ENCODE measurements at regions of chr19 and their contacts with region 1.

Region 1: GRCh38 chr19:49363268-49364082 is at the start of gene DKKL1:
- DNase-seq: peak; percentile 92
- ATAC-seq: peak; percentile 88
- H3K4me3 Mint-ChIP-seq: no peak within 1 kb of the TSS
- H3K27ac Mint-ChIP-seq: no peak within 1 kb of the TSS
- H3K4me1 Mint-ChIP-seq: peaks cover 11% of the 10 kb centered on the region
- H3K27me3 Mint-ChIP-seq: peaks cover 23% of the 10 kb centered on the region
- total RNA-seq, gene DKKL1: not detected

Region 2: GRCh38 chr19:48624067-48624594 is 739.3 kb before region 1 on chr19:
- CTCF ChIA-PET with region 1: no interaction called
- POLR2A ChIA-PET with region 1: no interaction called
- intact Hi-C with region 1: no loop called
- DNase-seq: peak; percentile 99
- ATAC-seq: peak; percentile 84
- H3K4me3 Mint-ChIP-seq: peak overlapping the region; percentile 73
- H3K27ac Mint-ChIP-seq: peak overlapping the region; percentile 99
- H3K4me1 Mint-ChIP-seq: peaks cover 45% of the 10 kb centered on the region
- H3K27me3 Mint-ChIP-seq: no peaks in the 10 kb centered on the region

Region 3: DNA sequence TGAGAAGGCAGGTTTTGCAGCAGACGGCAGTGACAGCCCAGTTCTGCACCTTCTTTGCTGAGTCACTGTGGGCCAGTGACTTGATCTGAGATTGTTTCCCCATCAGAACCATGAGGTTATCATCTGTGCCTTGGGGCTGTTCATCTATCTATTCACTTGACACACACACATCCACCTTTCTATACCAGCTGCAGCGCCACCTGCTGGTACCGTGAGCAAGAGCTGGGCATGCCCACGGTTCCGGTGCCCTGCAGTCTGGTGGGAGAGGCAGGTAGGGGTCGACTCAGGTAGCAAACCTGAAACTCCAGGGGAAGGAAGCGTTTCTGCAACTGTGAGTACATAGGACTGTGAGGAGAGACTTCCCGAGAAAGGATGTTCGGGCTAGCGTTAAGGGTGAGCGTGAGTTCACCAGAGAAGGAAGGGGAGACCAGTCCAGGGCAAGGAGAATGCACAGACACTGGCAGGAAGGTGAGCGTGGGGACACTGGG is 256.8 kb before region 1 on chr19:
- CTCF ChIA-PET with region 1: no interaction called
- POLR2A ChIA-PET with region 1: no interaction called
- intact Hi-C with region 1: no loop called
- DNase-seq: peak; percentile 82
- ATAC-seq: peak; percentile 84
- H3K4me3 Mint-ChIP-seq: no peak overlapping the region
- H3K27ac Mint-ChIP-seq: no peak overlapping the region
- H3K4me1 Mint-ChIP-seq: peaks cover 4% of the 10 kb centered on the region
- H3K27me3 Mint-ChIP-seq: no peaks in the 10 kb centered on the region

Region 4: DNA sequence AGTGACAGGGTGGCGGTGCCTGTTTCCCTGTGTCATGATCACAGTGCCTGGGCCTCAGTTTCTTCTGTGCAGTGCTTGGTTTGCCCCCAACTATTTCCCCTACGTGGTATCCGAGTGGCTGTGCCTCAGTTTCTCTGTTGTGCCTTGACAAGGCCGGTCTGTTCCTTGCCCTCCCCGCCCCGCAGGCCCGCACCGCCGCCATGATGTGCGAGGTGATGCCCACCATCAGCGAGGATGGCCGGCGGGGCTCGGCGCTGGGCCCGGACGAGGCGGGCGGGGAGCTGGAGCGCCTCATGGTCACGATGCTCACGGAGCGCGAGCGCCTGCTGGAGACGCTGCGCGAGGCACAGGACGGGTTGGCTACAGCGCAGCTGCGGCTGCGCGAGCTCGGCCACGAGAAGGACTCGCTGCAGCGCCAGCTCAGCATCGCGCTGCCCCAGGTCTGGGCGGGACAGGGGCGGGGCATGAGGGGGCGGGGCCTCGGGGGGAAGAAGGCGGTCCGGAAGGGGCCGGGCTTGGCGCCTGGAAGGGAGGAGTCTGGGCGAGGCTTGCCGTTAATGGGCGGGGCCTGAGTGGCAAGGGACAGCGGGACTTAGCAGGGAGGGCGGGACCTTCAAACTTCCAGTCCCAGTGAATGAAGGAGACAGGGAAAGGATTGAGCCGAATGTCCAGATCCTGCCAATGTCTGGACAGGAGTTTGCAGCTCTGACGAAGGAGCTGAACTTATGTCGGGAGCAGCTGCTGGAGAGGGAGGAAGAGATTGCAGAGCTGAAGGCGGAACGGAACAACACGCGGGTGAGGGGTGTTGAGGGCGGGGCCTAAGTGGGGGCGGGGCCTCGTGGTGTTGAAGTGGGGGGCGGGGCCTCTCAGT is 235.6 kb before region 1 on chr19:
- CTCF ChIA-PET with region 1: no interaction called
- POLR2A ChIA-PET with region 1: no interaction called
- intact Hi-C with region 1: loop called in 1 of 2 experiments (anchors 1 kb)
- DNase-seq: peak; percentile 98
- ATAC-seq: peak; percentile 95
- H3K4me3 Mint-ChIP-seq: peak overlapping the region; percentile 76
- H3K27ac Mint-ChIP-seq: peak overlapping the region; percentile 92
- H3K4me1 Mint-ChIP-seq: peaks cover 11% of the 10 kb centered on the region
- H3K27me3 Mint-ChIP-seq: no peaks in the 10 kb centered on the region

Region 5: DNA sequence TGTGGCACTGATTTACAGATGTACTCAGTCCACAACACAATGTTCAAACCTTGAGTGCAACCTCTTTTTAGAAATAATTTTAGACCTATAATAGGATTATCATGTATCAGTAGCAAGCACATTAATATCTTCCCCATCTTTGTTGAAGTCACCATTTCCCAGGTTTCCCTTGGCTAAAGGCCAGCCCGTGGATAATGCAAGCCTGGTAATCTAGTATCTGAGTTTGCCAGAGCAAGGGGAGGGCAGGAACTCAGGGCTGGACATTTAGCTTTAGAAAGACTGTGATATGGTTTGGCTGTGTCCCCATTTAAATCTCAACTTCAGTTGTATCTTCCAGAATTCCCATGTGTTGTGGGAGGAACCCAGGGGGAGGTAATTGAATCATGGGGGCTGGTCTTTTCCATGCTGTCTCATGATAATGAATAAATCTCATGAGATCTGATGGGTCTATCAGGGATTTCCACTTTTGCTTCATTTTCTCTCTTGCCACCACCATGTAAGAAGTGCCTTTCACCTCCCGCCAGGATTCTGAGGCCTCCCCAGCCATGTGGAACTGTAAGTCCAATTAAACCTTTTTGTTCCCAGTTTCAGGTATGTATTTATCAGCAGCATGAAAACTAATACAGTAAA is 76.2 kb before region 1 on chr19:
- CTCF ChIA-PET with region 1: no interaction called
- POLR2A ChIA-PET with region 1: no interaction called
- intact Hi-C with region 1: no loop called
- DNase-seq: no peak
- ATAC-seq: no peak
- H3K4me3 Mint-ChIP-seq: no peak overlapping the region
- H3K27ac Mint-ChIP-seq: no peak overlapping the region
- H3K4me1 Mint-ChIP-seq: no peaks in the 10 kb centered on the region
- H3K27me3 Mint-ChIP-seq: no peaks in the 10 kb centered on the region

Region 6: DNA sequence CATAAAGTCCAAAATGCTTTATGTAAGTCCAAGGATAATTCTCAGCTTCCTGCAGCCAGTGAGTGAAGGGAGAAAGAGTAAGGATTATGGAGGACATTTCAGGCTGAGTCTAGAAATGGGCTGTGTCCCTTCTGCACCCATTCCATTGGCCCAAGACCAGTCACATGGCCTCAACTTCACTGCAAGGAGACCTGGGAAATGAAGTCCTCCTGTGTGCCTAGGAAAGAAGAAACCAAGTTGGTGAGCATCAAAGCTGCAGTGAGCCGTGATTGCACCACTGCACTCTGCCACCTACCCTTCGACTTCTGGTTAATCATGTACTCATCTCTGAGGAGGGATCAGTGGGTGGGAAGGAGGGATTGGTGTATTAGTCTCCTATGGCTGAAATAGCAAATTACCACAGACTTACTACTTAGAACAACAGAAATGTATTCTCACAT is 31.8 kb before region 1 on chr19:
- CTCF ChIA-PET with region 1: interaction called, 3 read pairs
- POLR2A ChIA-PET with region 1: no interaction called
- intact Hi-C with region 1: loop called (anchors 2 kb)
- DNase-seq: peak; percentile 80
- ATAC-seq: peak; percentile 80
- H3K4me3 Mint-ChIP-seq: peak overlapping the region; percentile 33
- H3K27ac Mint-ChIP-seq: peak overlapping the region; percentile 75
- H3K4me1 Mint-ChIP-seq: peaks cover 81% of the 10 kb centered on the region
- H3K27me3 Mint-ChIP-seq: no peaks in the 10 kb centered on the region

Region 7: GRCh38 chr19:49382639-49383038 is 19.2 kb after region 1 on chr19:
- CTCF ChIA-PET with region 1: interaction called, 3 read pairs
- POLR2A ChIA-PET with region 1: no interaction called
- intact Hi-C with region 1: loop called in 1 of 2 experiments (anchors 2 kb)
- DNase-seq: no peak
- ATAC-seq: no peak
- H3K4me3 Mint-ChIP-seq: no peak overlapping the region
- H3K27ac Mint-ChIP-seq: no peak overlapping the region
- H3K4me1 Mint-ChIP-seq: peaks cover 3% of the 10 kb centered on the region
- H3K27me3 Mint-ChIP-seq: no peaks in the 10 kb centered on the region

Region 8: GRCh38 chr19:49391581-49392399 is 28.3 kb after region 1 on chr19:
- CTCF ChIA-PET with region 1: no interaction called
- POLR2A ChIA-PET with region 1: interaction called, 3 read pairs
- intact Hi-C with region 1: loop called in 1 of 2 experiments (anchors 1 kb)
- DNase-seq: peak; percentile 90
- ATAC-seq: peak; percentile 83
- H3K4me3 Mint-ChIP-seq: no peak overlapping the region
- H3K27ac Mint-ChIP-seq: no peak overlapping the region
- H3K4me1 Mint-ChIP-seq: peaks cover 16% of the 10 kb centered on the region
- H3K27me3 Mint-ChIP-seq: no peaks in the 10 kb centered on the region

Region 9: DNA sequence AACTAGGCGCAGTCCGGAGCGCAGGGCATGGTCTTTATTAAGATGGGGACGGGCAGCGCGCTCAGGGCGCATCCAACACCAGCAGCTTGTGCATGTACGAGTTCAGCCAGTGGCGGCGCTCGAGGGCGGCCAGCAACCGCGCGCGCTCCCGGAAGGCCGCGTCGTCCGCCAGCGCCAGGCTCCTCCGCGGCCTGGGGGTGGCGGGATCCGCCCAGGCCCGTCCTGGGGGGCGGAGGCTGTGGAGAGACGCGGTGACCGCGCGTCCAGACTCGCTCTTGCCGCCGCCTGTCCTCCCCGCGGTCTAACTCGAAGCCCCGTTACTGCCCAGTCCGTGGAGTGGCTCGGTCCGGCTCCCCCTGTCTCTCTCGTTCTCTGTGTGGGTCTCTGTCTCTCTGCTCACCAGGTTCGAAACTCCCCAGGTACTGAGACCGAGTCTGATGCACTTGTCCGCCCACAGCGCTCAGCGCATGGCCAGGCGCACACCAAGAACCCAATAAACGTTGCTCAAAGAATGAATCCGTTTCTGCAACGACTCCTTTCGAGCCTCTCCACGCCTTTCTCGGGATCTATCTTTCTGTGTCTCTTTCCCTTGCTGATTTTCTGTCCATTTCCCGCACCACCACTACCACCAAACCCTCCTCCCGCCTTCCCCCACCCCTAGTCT is 59.1 kb after region 1 on chr19:
- CTCF ChIA-PET with region 1: no interaction called
- POLR2A ChIA-PET with region 1: no interaction called
- intact Hi-C with region 1: loop called in 1 of 2 experiments (anchors 1 kb)
- DNase-seq: peak; percentile 83
- ATAC-seq: peak; percentile 77
- H3K4me3 Mint-ChIP-seq: peak overlapping the region; percentile 57
- H3K27ac Mint-ChIP-seq: no peak overlapping the region
- H3K4me1 Mint-ChIP-seq: peaks cover 43% of the 10 kb centered on the region
- H3K27me3 Mint-ChIP-seq: peaks cover 72% of the 10 kb centered on the region

Region 10: GRCh38 chr19:49528211-49528771 is 164.8 kb after region 1 on chr19:
- CTCF ChIA-PET with region 1: no interaction called
- POLR2A ChIA-PET with region 1: no interaction called
- intact Hi-C with region 1: loop called in 1 of 2 experiments (anchors 1 kb)
- DNase-seq: peak; percentile 29
- ATAC-seq: no peak
- H3K4me3 Mint-ChIP-seq: peak overlapping the region; percentile 73
- H3K27ac Mint-ChIP-seq: no peak overlapping the region
- H3K4me1 Mint-ChIP-seq: peaks cover 18% of the 10 kb centered on the region
- H3K27me3 Mint-ChIP-seq: no peaks in the 10 kb centered on the region